Activated naive CD4-positive, alpha-beta T cell treated with anti-CD3 and anti-CD28 coated beads for 36 hours (primary cell): ENCODE measurements at regions of chr1 and their contacts with region 1.

Region 1: DNA sequence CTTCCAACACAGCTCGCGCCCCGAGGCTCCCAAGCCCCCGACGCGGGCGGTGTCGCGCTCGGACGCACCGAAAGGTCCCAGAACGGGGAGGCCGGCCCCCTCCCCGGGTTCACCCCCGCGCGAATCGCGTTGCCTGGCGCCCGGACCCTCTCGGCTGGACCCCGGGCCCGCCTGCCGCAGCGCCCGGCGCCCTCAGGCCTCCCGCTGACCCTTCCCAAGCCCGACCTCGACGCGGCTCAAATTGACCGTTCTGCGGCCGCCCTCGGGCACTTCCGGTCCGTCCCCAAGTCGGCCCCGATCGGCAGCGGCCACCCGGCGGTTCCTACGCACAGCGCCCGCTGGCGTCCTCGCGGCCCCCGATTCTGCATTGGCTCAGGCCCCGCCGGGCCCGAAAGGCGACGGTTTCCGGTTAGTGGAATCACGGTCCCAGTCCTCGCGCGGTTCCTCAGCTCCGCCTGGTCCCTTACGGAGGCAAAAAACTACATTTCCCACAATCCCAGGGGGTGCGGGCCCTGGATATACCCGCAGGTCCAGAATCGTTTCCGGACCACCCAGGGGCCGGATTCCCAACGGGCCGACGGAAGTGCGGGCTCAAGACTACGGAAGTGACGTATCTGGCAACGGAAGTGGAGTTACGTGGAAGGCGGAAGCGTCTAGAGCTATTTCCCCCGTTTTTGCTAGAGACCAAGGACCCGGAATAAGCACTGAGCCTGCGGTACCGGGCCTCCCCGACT is at the start of gene AURKAIP1:
- DNase-seq: peak; percentile 98
- H3K4me3 Mint-ChIP-seq: peak within 1 kb of the TSS; percentile 89
- H3K27ac Mint-ChIP-seq: peak within 1 kb of the TSS; percentile 90
- H3K4me1 Mint-ChIP-seq: peaks cover 25% of the 10 kb centered on the region
- H3K27me3 Mint-ChIP-seq: no peaks in the 10 kb centered on the region
- total RNA-seq, gene AURKAIP1: 108 TPM

Region 2: DNA sequence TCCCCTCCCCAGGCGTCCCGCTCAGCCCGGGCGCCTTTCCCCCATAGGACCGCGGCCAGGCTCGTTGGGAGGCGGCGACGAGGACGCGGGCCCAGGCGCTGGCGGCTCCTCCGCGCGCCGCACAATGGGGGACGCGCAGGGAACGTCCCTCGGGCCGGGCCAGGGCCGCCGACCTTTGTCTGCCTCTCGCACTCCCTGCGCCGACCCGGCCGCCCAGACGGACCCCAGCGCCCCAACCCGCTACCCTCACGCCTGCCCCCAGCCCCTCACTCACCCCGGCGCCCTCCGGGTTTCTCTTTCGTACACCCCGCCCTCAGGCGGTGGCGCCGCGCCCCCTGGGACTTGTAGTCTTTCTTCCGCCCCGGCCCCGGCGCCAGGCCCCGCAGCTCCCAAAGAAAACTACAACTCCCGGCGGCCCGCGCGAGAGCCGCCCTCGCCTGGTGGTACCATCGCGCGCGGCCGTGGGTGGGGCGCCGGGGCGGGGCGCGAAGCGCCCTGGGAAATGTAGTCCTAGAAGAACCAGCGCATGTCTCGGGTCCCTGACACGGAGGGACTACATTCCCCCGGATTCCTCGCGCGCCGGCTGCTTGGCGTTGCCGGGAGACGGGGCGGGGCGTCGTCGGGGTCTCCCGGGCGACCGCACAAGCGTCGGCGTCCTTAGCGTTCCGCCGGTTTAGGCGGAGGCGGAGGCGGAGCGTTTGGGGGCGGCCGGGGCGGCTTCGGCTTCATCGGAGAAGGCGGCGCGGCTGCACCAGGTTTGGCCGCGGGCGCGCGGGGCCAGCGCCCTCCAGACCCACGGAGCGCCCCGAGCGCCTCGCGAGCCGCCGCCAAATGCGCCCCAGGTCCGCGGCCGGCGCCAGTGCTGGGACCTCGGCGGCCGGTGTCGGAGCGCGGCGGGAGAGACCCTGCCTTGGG is 259.1 kb before region 1 on chr1 and contains the start of gene C1orf159:
- CTCF ChIA-PET with region 1: no interaction called
- intact Hi-C with region 1: loop called (anchors 1 kb)
- DNase-seq: peak; percentile 99
- H3K4me3 Mint-ChIP-seq: peak within 1 kb of the TSS; percentile 82
- H3K27ac Mint-ChIP-seq: peak within 1 kb of the TSS; percentile 65
- H3K4me1 Mint-ChIP-seq: peaks cover 17% of the 10 kb centered on the region
- H3K27me3 Mint-ChIP-seq: no peaks in the 10 kb centered on the region
- total RNA-seq, gene C1orf159: 14.9 to 18.6 TPM

Region 3: DNA sequence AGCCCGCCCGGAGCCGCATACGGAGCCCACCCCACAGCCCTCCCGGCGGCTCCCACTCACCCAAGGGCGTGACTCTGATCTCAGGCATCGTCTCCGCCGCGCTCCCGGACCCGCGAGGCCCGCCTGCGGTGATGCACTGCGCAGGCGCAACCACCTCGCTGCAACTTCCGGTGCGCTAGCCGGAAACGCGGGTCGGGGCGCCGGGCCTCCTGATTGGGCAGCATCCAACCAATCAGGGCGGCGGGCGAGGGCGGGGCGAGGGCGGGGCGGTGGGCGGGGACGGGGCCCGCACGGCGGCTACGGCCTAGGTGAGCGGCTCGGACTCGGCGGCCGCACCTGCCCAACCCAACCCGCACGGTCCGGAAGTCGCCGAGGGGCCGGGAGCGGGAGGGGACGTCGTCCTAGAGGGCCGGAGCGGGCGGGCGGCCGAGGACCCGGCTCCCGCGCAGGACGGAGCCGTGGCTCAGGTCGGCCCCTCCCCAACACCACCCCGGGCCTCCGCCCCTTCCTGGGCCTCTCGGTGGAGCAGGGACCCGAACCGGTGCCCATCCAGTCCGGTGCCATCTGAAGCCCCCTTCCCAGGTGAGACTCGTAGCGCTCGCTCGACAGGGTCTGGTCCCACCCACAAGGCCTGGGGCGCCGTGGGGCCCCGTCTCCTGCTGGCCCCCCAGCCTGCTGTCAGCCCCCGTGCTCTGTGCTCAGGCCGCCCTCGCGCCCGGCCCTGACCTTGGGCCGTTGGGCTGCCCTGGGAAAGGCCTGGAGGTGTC is 50.4 kb before region 1 on chr1 and contains the starts of genes CPTP and INTS11:
- CTCF ChIA-PET with region 1: no interaction called
- intact Hi-C with region 1: loop called (anchors 2 kb)
- DNase-seq: peak; percentile 97
- H3K4me3 Mint-ChIP-seq: peak within 1 kb of the TSS; percentile 92
- H3K27ac Mint-ChIP-seq: peak within 1 kb of the TSS; percentile 84
- H3K4me1 Mint-ChIP-seq: peaks cover 36% of the 10 kb centered on the region
- H3K27me3 Mint-ChIP-seq: no peaks in the 10 kb centered on the region
- total RNA-seq, gene CPTP: 5.6 to 5.7 TPM
- total RNA-seq, gene INTS11: 117 to 118 TPM

Region 4: DNA sequence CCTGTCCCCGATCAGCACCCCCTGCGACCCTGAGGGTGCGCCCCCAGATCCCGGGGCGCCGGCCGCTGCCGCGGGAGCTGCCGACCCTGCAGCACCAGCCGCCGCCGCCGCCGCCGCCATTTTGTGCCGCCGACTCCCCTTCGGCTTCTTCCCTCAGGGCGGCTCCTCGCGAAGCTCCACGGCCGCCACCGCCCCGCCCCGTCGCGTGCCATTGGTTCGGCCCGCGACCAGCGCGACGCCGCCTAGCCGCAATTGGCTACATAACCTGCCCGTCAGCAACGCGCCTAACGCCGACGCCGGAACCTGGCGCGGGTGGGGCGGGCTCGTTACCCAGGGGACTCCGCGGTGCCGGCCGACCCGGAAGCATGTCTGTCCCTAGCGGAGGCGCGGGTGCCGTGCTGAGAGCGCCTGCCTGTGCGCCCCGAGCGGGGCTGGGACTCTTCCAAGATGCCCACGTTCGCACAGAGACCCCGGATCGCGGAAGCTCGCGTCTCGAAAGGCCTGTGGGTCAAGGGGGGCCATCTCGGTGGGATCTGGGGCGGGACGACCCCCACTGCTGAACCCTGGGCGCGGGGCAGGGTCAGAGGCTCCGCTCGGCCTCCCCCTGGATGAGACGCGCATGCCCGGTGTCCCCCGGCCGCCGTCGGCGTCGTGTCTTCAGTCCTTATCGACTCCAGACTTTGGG is 24.2 kb after region 1 on chr1 and contains the start of gene CCNL2:
- CTCF ChIA-PET with region 1: interaction called, 4 read pairs
- intact Hi-C with region 1: loop called (anchors 1 kb)
- DNase-seq: peak; percentile 99
- H3K4me3 Mint-ChIP-seq: peak within 1 kb of the TSS; percentile 91
- H3K27ac Mint-ChIP-seq: peak within 1 kb of the TSS; percentile 85
- H3K4me1 Mint-ChIP-seq: peaks cover 57% of the 10 kb centered on the region
- H3K27me3 Mint-ChIP-seq: no peaks in the 10 kb centered on the region
- total RNA-seq, gene CCNL2: 97.7 to 108 TPM

Region 5: DNA sequence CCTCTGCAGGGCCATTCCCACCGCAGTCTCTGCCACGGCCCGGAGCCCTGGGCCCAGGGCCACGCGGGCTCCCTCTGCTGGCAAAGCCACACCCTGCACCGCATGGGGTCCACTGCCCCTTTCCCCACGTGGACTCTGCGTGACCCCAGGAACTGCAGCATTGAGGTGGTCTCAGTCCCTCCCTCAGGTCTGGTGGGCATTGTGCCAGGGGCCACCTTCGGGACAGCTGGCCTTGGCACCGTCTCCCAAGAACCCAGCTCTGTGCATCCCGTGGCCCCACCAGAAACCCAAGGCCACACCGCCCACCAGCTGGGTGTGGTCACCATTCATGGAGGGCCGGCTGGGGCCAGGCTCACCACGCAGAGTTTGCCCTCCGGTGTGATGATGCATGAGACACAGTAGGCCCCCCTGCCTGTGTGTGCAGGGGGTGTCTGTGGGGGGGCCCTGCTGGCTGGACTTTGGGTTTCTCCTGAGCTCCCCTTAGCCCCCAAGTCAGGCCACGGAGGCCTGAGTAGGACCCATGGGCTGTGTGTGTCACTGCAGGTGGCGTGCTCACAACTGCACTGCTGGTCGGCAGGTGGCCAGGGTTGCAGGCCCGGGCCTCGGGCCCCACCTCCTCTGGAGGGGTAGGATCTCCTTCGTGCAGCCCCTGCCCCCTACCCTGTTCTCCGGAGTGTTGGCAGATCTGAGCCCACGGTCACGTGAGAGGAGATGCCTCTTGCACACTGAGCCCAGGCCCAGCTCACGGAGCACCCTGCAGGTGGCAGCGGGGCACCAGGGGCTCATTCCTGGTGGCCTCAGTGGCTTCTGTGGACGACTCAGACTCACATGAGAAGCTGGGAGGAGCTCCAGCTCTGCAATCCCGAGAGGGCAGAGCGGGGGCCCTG is 66.1 kb after region 1 on chr1:
- CTCF ChIA-PET with region 1: interaction called, 6 read pairs
- intact Hi-C with region 1: loop called (anchors 1 kb)
- DNase-seq: peak; percentile 60
- H3K4me3 Mint-ChIP-seq: no peak overlapping the region
- H3K27ac Mint-ChIP-seq: no peak overlapping the region
- H3K4me1 Mint-ChIP-seq: peaks cover 5% of the 10 kb centered on the region
- H3K27me3 Mint-ChIP-seq: peaks cover 14% of the 10 kb centered on the region

Region 6: DNA sequence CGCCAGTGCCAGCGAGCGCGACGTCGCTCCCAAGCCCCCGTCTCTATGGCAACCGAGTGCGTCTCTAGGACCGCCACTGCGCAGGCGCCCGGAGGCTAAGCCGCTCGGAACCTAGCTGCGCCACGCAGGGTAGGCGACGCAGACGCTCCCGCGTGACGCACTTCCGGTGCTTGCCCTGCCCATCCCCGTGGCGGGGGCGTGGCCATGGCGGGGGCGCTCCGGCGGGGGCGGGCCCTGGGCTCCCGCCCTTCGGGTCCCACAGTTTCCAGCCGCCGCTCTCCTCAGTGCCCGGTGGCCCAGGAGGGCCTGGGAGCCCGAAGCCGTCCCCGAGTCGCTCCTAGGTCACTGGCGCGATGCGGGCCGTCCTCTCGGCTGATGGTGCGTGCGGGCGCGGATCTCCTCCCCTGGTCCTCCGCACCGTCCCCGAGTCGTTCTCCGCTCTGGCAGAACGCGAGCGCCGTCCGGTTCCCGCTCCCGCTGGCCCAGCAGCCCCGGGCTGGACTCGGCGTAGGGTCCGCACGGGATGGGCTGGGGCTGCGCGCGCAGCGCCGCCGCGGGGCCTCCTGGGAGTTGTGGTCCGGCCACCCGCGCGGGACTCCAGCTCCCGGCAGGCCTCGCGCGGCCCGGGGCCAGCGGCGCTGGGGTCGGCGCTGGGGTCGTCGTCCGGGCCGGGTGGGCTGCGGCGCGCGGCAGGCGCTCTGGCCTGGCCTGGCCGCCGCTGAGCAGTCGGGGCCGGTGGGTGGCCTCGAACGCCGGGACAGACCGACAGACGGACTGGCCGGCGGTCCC is 240.4 kb after region 1 on chr1 and contains the start of gene MIB2:
- CTCF ChIA-PET with region 1: no interaction called
- intact Hi-C with region 1: loop called (anchors 1 kb)
- DNase-seq: peak; percentile 95
- H3K4me3 Mint-ChIP-seq: peak within 1 kb of the TSS; percentile 90
- H3K27ac Mint-ChIP-seq: peak within 1 kb of the TSS; percentile 85
- H3K4me1 Mint-ChIP-seq: peaks cover 24% of the 10 kb centered on the region
- H3K27me3 Mint-ChIP-seq: no peaks in the 10 kb centered on the region
- total RNA-seq, gene MIB2: 27.6 to 31.7 TPM